Calu3 (cell line): ENCODE measurements at regions of chr9 and their contacts with region 1.

Region 1: DNA sequence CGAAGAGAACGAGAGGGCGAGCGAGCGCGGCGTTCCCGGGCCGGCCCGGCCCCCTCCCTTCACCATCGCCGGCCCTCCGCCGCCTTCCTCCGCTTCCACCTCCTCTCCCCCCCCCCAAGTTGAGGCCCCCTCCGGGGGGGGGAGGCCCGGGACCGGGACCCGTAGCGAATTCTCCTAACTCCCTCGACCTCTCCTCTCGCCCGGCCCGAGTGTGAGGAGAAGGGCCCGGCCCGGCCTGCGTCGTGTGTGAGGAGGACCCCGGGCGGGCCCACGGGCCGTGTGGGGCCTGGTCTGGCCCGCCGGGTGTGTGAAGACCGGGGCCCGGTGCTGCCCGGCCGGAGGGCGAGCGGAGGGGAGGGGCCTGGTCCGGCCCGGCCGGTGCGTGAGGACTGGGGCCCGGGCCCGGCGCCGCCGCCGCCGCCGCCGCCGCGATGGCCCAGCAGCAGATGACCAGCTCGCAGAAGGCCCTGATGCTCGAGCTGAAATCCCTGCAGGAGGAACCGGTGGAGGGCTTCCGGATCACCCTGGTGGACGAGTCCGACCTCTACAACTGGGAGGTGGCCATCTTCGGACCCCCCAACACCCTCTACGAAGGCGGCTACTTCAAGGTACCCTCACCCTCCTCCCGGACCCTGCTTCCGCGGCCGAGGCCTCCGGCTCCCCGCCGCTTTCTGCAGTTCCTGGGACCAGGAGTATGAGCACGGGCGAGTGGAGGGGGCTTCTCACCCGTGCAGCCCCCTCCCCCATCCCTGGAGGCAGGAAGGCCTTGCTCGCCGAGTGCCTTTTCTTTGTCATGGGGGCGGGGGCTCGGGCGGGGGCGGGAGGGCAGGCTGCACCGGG is 587 bp downstream of the UBE2R2 start:
- DNase-seq: peak; percentile 60
- H3K4me3 Mint-ChIP-seq: peak overlapping the region; percentile 93
- H3K27ac Mint-ChIP-seq: no peak overlapping the region
- H3K4me1 Mint-ChIP-seq: peaks cover 39% of the 10 kb centered on the region
- H3K27me3 Mint-ChIP-seq: no peaks in the 10 kb centered on the region
- CTCF ChIP-seq: no peak

Region 2: GRCh38 chr9:33785913-33786312 is 31.6 kb before region 1 on chr9:
- CTCF ChIA-PET with region 1: no interaction called
- intact Hi-C with region 1: no loop called
- DNase-seq: no peak
- H3K4me3 Mint-ChIP-seq: no peak overlapping the region
- H3K27ac Mint-ChIP-seq: no peak overlapping the region
- H3K4me1 Mint-ChIP-seq: peaks cover 19% of the 10 kb centered on the region
- H3K27me3 Mint-ChIP-seq: no peaks in the 10 kb centered on the region
- CTCF ChIP-seq: no peak

Region 3: GRCh38 chr9:33852216-33852826 is 34.8 kb after region 1 on chr9:
- CTCF ChIA-PET with region 1: interaction called, 29 read pairs
- intact Hi-C with region 1: loop called (anchors 2 kb)
- DNase-seq: peak; percentile 65
- H3K4me3 Mint-ChIP-seq: no peak overlapping the region
- H3K27ac Mint-ChIP-seq: no peak overlapping the region
- H3K4me1 Mint-ChIP-seq: peaks cover 42% of the 10 kb centered on the region
- H3K27me3 Mint-ChIP-seq: no peaks in the 10 kb centered on the region
- CTCF ChIP-seq: no peak

Region 4: GRCh38 chr9:33884856-33885701 is 67.5 kb after region 1 on chr9:
- CTCF ChIA-PET with region 1: interaction called, 12 read pairs
- intact Hi-C with region 1: no loop called
- DNase-seq: peak; percentile 8
- H3K4me3 Mint-ChIP-seq: no peak overlapping the region
- H3K27ac Mint-ChIP-seq: no peak overlapping the region
- H3K4me1 Mint-ChIP-seq: peaks cover 17% of the 10 kb centered on the region
- H3K27me3 Mint-ChIP-seq: no peaks in the 10 kb centered on the region
- CTCF ChIP-seq: no peak

Region 5: GRCh38 chr9:33942471-33943083 is 125.0 kb after region 1 on chr9:
- CTCF ChIA-PET with region 1: no interaction called
- intact Hi-C with region 1: no loop called
- DNase-seq: no peak
- H3K4me3 Mint-ChIP-seq: no peak overlapping the region
- H3K27ac Mint-ChIP-seq: no peak overlapping the region
- H3K4me1 Mint-ChIP-seq: peaks cover 42% of the 10 kb centered on the region
- H3K27me3 Mint-ChIP-seq: no peaks in the 10 kb centered on the region
- CTCF ChIP-seq: no peak